ENCODE measurements at regions of chr4 and their contacts with region 1.

Region 1: GRCh38 chr4:40173470-40173875 is 23.4 kb upstream of the RHOH start:
- DNase-seq: no peak
- ATAC-seq: peak; percentile 63
- H3K4me3 ChIP-seq: no peak overlapping the region
- H3K4me3 Mint-ChIP-seq: peak overlapping the region; percentile 50 to 79 (median 73)
- H3K27ac ChIP-seq: peak overlapping the region; percentile 38
- H3K27ac Mint-ChIP-seq: peak overlapping the region; percentile 71 to 94 (median 83)
- H3K4me1 ChIP-seq: peaks cover 0 to 8% of the 10 kb centered on the region in 2 donors
- H3K4me1 Mint-ChIP-seq: peaks cover 14 to 33% (median 29%) of the 10 kb centered on the region in 7 donors
- H3K27me3 ChIP-seq: no peaks in the 10 kb centered on the region
- H3K27me3 Mint-ChIP-seq: no peaks in the 10 kb centered on the region

Region 2: DNA sequence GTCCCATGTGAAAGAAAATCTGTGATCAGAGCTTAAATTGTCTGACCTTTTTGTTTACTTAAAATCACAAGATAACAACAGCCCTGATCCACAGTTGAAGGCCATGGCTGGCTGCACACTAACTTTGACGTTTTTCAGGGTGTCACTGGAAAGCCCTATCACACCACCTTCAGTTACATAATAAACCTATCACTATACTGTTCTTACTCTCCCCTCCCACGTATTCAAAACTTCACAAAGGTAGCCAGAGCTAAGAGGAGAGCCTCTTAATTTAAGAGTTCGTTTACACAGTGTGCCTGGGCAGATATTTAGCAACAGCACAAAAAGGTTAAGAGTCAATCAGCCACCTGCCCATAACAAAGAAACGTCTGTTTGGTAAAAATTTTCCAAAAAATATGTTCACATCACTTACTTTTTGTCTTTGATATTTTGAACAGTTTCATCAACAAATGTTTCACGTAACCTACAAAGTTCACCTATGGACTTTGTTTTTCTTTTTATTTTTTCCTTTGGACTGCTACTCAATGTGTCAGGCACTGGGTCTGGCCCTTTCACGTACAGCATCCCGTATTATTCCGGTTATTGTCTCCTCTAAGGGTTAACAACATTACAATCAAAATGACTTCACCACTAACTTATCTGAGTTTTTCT is 832.3 kb before region 1 on chr4:
- CTCF ChIA-PET with region 1: no interaction called
- POLR2A ChIA-PET with region 1: no interaction called
- intact Hi-C with region 1: no loop called
- DNase-seq: no peak
- ATAC-seq: no peak
- H3K4me3 ChIP-seq: no peak overlapping the region
- H3K4me3 Mint-ChIP-seq: no peak overlapping the region
- H3K27ac ChIP-seq: no peak overlapping the region
- H3K27ac Mint-ChIP-seq: peak overlapping the region in 2 of 9 donors; percentile 38 to 45
- H3K4me1 ChIP-seq: no peaks in the 10 kb centered on the region
- H3K4me1 Mint-ChIP-seq: peaks cover 19 to 63% (median 49%) of the 10 kb centered on the region in 7 donors
- H3K27me3 ChIP-seq: no peaks in the 10 kb centered on the region
- H3K27me3 Mint-ChIP-seq: no peaks in the 10 kb centered on the region

Region 3: DNA sequence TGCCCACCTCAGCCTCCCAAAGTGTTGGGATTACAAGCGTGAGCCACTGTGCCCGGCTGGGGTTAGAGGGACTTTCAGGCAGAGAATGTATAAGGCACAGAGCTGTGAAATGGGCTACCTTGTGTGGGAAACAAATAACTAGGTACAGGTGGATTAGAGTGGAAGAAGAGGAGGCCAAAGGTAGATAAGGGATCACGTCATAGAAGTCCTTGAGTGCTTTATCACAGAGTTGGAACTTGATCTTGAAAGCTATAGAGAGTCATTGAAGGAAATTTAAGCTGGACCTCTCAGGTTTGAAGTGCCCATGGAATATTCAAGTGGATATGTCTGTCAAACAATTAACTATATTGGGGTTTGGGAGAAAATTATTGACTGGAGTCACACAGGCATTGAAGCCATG is 108.5 kb before region 1 on chr4:
- CTCF ChIA-PET with region 1: no interaction called
- POLR2A ChIA-PET with region 1: no interaction called
- intact Hi-C with region 1: no loop called
- DNase-seq: no peak
- ATAC-seq: no peak
- H3K4me3 ChIP-seq: no peak overlapping the region
- H3K4me3 Mint-ChIP-seq: peak overlapping the region in 9 of 10 donors; percentile 18 to 73 (median 56)
- H3K27ac ChIP-seq: no peak overlapping the region
- H3K27ac Mint-ChIP-seq: peak overlapping the region; percentile 9 to 80 (median 62)
- H3K4me1 ChIP-seq: peaks cover 0 to 4% of the 10 kb centered on the region in 2 donors
- H3K4me1 Mint-ChIP-seq: peaks cover 33 to 68% (median 60%) of the 10 kb centered on the region in 7 donors
- H3K27me3 ChIP-seq: no peaks in the 10 kb centered on the region
- H3K27me3 Mint-ChIP-seq: no peaks in the 10 kb centered on the region

Region 4: GRCh38 chr4:40160258-40160657 is 13.2 kb before region 1 on chr4:
- CTCF ChIA-PET with region 1: no interaction called
- POLR2A ChIA-PET with region 1: no interaction called
- intact Hi-C with region 1: no loop called
- DNase-seq: no peak
- ATAC-seq: no peak
- H3K4me3 ChIP-seq: no peak overlapping the region
- H3K4me3 Mint-ChIP-seq: no peak overlapping the region
- H3K27ac ChIP-seq: no peak overlapping the region
- H3K27ac Mint-ChIP-seq: peak overlapping the region in 1 of 9 donors; percentile 54
- H3K4me1 ChIP-seq: no peaks in the 10 kb centered on the region
- H3K4me1 Mint-ChIP-seq: peaks cover 0 to 13% (median 5%) of the 10 kb centered on the region in 7 donors
- H3K27me3 ChIP-seq: no peaks in the 10 kb centered on the region
- H3K27me3 Mint-ChIP-seq: no peaks in the 10 kb centered on the region

Region 5: DNA sequence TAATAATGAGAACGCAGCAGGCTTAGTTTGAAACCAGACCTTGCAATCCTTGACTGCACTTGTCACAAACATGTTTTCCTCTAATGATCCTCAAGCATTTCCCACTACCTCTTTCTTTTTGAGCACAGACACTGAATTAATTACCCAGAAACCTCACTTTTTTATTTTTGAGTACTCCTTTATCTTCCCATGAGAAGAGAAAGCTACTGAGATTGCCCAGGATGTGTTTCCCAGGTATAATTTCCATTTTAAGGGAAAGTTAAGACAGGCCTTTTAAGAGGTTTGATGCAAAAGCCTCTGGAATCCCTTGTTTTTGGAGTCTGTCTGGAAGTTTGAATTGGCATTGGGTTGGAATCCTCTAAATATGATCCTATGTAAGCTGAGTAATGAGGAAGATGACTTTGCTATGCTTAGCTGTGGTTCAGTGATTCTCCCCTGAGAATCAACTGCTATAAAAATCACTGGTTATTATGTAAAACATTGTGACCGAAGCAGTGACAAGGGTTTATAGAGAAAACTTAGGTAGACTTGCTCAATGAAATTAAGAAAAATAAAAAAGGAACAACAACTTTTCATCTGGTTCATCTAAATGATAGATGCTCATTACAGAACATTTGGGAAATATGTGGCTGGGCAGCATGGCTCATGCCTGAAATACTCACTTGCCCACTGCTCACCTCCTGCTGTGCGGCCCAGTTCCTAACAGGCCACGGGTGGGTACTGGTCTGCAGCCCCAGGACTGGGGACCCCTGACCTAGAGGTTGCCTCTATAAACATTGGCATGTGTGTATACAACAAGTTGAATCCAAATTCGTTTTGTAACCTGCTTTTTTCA is 12.6 kb after region 1 on chr4:
- CTCF ChIA-PET with region 1: interaction called, 5 read pairs
- POLR2A ChIA-PET with region 1: interaction called, 17 read pairs
- intact Hi-C with region 1: loop called (anchors 1 to 2 kb)
- DNase-seq: no peak
- ATAC-seq: no peak
- H3K4me3 ChIP-seq: no peak overlapping the region
- H3K4me3 Mint-ChIP-seq: peak overlapping the region in 1 of 10 donors; percentile 35
- H3K27ac ChIP-seq: no peak overlapping the region
- H3K27ac Mint-ChIP-seq: peak overlapping the region in 5 of 9 donors; percentile 21 to 87 (median 28)
- H3K4me1 ChIP-seq: peaks cover 6 to 31% of the 10 kb centered on the region in 2 donors
- H3K4me1 Mint-ChIP-seq: peaks cover 31 to 76% (median 67%) of the 10 kb centered on the region in 7 donors
- H3K27me3 ChIP-seq: no peaks in the 10 kb centered on the region
- H3K27me3 Mint-ChIP-seq: no peaks in the 10 kb centered on the region